RWPE1 (cell line): ENCODE measurements at regions of chr17 and their contacts with region 1.

Region 1: DNA sequence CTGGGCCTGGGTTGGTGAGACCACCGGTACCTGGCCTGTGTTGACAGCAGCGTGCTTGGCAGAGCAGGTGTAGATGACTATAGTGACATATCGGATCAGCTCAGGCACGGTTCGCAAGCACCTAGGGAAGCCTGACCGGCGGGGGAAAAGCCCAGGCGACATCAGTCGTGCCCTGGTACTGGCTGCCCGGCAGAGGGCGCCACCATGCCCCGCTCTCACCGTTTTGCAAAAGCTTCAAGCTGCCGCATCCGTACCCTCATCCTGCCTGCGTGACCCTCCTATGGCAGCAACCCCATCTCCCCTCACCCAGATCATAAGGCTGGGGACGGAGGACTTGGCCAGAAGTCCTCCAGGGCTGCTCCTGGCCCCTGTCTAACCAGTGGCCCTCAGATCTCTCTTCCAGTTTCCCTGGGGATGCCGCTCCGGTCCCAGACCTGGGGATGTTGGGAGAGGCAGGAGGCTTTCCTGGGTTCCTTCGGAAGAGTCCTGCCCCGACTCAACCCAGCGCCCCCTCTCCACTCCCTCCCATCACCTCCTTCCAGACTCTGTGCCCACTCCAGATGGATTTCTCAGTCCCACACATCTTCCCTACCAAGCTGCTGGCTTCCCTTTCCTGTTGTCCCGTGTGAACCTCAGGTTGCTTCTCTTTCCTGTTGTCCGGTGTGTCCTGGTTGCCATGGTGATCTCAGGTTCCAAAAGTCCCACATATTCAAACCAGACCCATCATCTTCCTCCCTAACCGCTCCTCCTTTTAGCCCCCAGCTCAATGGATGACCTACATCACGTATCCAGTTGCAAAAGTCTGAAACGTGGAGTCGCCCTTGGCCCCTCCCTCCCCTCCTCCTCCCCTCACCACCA is 13.7 kb downstream of the ALOX12B start:
- DNase-seq: peak; percentile 66
- H3K27ac ChIP-seq: peak overlapping the region; percentile 30; the same call in 1 of the 2 replicates
- CTCF ChIP-seq: peak; percentile 81

Region 2: DNA sequence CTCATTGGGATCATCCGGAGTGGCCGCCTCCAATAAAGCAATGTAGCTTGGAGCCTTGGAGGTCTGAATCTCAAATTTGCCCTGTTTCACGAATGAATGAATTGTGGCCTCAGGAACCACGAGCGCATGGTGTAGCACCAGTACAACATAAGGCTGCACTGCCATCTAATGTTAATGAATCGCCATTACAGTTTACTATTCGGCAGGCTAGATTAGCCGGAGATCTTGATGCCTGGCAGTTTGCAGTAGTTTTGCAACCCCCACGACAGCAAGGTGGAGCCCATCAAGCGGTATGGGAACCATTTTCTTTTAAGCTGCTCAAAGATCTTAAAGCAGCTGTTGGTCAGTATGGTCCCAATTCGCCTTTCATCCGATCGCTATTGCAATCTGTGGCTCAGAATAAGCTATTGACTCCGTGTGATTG is 16.2 kb before region 1 on chr17:
- CTCF ChIA-PET with region 1: interaction called, 30 read pairs
- POLR2A ChIA-PET with region 1: no interaction called
- DNase-seq: peak; percentile 82
- H3K27ac ChIP-seq: no peak overlapping the region
- CTCF ChIP-seq: peak; percentile 77

Region 3: DNA sequence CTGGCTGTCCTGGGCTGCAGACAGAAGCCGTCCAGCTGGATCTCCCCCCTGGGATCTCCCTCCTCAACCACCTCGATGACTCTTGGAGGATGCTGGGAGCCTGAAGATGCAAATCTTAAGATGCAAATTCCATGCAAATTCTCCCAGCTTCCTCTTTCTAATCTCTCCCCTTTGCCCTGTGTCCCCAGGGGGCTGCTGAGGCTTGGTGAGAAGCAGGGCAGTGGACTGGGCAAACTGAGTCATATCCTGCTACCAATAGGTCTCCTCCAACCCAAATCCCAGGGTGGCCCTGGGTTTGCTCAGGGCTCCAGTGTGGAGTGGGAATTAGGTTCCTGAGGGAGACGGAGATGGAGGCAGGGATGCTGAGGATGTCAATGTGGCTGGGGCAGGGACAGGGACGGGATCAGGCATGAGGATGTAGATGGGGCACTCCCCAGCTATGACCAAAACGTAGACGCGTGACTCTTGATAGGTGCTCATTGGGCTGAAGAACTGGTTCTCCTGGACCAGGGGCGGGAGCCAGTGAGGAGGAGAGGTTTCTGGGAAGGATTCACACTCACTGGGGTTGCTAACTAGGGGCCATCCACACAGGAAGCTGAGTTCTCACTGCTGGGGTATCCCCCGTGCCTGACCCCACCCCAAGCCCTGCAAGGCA is 17.3 kb after region 1 on chr17:
- CTCF ChIA-PET with region 1: interaction called, 11 read pairs
- POLR2A ChIA-PET with region 1: no interaction called
- DNase-seq: no peak
- H3K27ac ChIP-seq: no peak overlapping the region
- CTCF ChIP-seq: no peak

Region 4: GRCh38 chr17:8109661-8110464 is 36.0 kb after region 1 on chr17:
- CTCF ChIA-PET with region 1: interaction called, 48 read pairs
- POLR2A ChIA-PET with region 1: no interaction called
- DNase-seq: peak; percentile 55
- H3K27ac ChIP-seq: no peak overlapping the region; the same call in 1 of the 2 replicates
- CTCF ChIP-seq: peak; percentile 92

Region 5: GRCh38 chr17:8118769-8119580 is 45.1 kb after region 1 on chr17:
- CTCF ChIA-PET with region 1: interaction called, 48 read pairs
- POLR2A ChIA-PET with region 1: no interaction called
- DNase-seq: peak; percentile 75
- H3K27ac ChIP-seq: peak overlapping the region; percentile 95
- CTCF ChIP-seq: peak; percentile 91